ENCODE measurements at regions of chr12 and their contacts with region 1.

Region 1: DNA sequence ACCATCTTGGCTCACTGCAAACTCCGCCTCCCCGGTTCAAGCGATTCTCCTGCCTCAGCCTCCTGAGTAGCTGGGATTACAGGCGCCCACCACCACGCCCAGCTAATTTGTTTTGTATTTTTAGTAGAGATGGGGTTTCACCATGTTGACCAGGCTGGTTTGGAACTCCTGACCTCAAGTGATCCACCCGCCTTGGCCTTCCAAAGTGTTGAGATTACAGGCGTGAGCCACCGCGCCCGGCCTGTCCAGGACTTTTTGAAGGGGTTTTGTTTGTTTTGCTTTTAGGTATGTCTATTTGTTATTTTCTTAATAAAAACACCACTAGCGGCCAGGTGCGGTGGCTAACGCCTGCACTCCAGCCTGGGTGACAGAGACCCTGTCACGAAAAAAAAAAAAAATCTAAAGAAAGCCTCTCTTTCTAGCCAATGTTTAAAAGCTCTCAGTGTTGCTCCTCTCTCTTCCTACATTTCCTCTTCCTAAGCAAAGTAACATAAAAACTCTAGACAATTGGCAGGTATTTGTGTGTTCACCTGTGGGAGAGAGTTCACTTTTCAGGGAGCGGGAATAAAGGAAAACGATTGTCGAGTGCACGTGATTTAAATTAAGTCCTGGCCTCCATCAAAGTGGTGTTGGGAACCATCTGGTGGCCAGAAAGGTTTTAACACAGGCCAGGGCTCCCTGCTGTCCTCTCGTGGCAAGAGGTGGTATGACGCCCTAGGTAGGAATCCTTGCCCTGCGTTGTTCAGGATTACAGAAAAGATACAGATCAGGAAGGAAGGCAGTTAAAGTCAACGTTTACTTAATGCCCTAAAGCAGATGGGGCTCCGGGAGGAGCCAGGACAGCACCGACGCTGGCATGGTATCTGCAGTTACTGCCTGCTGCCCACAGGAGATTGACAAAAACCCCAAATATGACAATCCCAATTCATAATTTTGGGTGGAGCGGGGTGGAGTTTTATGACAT is 36.2 kb upstream of the ATP23 start:
- DNase-seq: peak; percentile 73 to 92 (median 80)
- ATAC-seq: peak; percentile 100
- H3K4me3 ChIP-seq: no peak overlapping the region
- H3K4me3 Mint-ChIP-seq: no peak overlapping the region
- H3K27ac ChIP-seq: no peak overlapping the region
- H3K27ac Mint-ChIP-seq: no peak overlapping the region
- H3K4me1 ChIP-seq: peaks cover 11% of the 10 kb centered on the region
- H3K4me1 Mint-ChIP-seq: peaks cover 12% of the 10 kb centered on the region
- H3K27me3 ChIP-seq: no peaks in the 10 kb centered on the region
- H3K27me3 Mint-ChIP-seq: peaks cover 14% of the 10 kb centered on the region
- CTCF ChIP-seq: peak; percentile 100

Region 2: DNA sequence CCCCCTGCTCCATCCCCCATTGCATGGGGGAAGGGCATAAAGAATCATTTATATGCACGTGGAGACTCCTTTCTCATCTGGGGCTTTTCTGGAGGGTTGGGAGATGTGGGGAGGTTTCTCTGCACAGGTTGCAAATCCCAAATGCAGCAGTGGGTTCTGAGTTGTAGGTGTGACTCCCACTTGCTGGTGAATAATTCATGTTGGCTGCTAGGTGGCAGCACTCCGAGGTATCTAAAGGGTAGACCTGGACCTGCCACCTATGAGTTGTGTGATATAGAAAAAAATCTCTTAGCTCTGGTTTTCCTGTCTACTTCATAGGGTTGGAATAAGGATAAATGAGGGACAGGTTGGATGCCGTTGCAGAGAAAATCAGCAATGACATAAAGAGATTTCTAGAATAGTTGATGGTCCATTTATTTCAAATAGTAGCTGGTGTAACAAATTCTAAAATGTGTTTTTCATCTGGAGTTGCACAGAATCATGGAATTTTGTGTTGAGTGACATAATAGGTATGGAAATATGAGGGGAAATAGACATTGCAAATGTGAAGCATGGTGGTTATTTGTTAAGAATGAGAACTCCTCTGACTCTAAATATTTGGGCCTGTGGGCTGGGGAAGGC is 145.7 kb before region 1 on chr12:
- CTCF ChIA-PET with region 1: interaction called, 7 read pairs
- POLR2A ChIA-PET with region 1: no interaction called
- intact Hi-C with region 1: loop called (anchors 1 to 2 kb)
- DNase-seq: peak in 10 of 14 experiments; percentile 28 to 77 (median 42)
- ATAC-seq: no peak
- H3K4me3 ChIP-seq: no peak overlapping the region
- H3K4me3 Mint-ChIP-seq: peak overlapping the region; percentile 77
- H3K27ac ChIP-seq: no peak overlapping the region
- H3K27ac Mint-ChIP-seq: peak overlapping the region; percentile 6
- H3K4me1 ChIP-seq: peaks cover 29% of the 10 kb centered on the region
- H3K4me1 Mint-ChIP-seq: peaks cover 45% of the 10 kb centered on the region
- H3K27me3 ChIP-seq: peaks cover 3 to 4% of the 10 kb centered on the region in 2 experiments
- H3K27me3 Mint-ChIP-seq: peaks cover 17% of the 10 kb centered on the region
- CTCF ChIP-seq: peak; percentile 65

Region 3: DNA sequence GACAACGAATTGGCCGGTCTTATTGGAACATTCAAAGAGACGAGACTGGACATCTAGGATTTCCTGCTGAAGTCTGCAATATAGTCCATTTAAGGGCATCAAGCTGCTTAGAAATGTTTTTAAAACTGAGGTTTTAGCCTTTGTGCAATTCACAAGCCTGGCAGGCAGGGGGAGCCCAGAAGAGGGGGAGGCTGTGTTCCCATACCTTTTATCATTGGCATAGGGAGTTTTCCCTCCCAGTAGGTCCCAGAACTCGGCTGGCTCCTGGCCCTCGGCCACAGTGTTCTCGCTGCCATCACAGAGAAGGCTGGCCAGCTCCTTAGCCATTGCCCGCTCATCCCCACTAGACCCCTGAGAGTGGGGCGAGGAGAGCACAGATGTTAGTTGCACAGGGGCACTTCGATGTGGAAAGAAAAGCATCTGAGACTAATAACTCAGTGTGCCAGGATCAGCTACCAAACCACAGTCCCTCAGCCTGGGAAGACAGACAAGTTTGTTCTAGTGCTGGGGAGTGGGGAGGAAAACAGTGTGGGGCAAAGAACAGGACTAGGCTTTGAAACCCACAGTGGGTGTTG is 101.7 kb before region 1 on chr12:
- CTCF ChIA-PET with region 1: interaction called, 11 read pairs
- POLR2A ChIA-PET with region 1: interaction called, 3 read pairs
- intact Hi-C with region 1: loop called (anchors 1 kb)
- DNase-seq: peak in 13 of 14 experiments; percentile 10 to 58 (median 29)
- ATAC-seq: no peak
- H3K4me3 ChIP-seq: no peak overlapping the region
- H3K4me3 Mint-ChIP-seq: no peak overlapping the region
- H3K27ac ChIP-seq: no peak overlapping the region
- H3K27ac Mint-ChIP-seq: no peak overlapping the region
- H3K4me1 ChIP-seq: no peaks in the 10 kb centered on the region
- H3K4me1 Mint-ChIP-seq: no peaks in the 10 kb centered on the region
- H3K27me3 ChIP-seq: no peaks in the 10 kb centered on the region
- H3K27me3 Mint-ChIP-seq: no peaks in the 10 kb centered on the region
- CTCF ChIP-seq: peak; percentile 76

Region 4: DNA sequence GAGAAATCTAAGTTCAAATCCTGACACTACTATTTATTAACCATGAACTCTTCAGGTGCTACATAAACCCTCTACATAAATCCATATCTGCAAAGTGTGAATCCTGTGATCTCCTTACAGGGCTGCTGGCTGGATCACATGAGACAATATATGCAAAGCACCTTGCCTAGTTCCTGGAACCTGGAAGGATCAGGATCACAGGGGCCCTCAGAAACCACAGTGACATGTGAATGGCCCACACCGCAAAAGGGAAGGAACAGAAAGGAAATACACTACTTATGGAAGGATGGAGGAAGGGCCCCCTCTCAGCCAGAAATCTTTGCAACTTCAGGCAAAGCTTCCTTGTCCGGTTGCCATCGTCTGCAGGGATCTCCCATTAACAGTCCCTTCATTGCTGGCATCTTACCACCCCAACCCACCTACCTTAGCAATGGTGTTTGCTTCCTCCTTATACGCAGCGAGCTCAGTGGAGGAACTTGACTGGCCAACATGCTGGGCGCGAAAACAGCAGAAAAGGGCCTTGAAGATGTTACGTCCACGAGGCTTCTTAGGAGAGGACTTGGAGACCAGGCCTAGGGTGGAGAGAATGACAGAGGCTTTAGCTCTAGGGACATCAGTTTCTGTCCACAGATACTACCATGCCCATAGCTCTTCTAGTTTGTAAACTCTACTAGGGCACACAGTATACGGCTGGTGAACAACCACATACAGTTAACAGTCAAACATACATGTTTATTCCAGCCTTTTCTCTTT is 75.9 kb before region 1 on chr12:
- CTCF ChIA-PET with region 1: interaction called, 11 read pairs
- POLR2A ChIA-PET with region 1: no interaction called
- intact Hi-C with region 1: loop called (anchors 1 kb)
- DNase-seq: no peak
- ATAC-seq: no peak
- H3K4me3 ChIP-seq: no peak overlapping the region
- H3K4me3 Mint-ChIP-seq: no peak overlapping the region
- H3K27ac ChIP-seq: no peak overlapping the region
- H3K27ac Mint-ChIP-seq: peak overlapping the region; percentile 92
- H3K4me1 ChIP-seq: peaks cover 64% of the 10 kb centered on the region
- H3K4me1 Mint-ChIP-seq: peaks cover 51% of the 10 kb centered on the region
- H3K27me3 ChIP-seq: no peaks in the 10 kb centered on the region
- H3K27me3 Mint-ChIP-seq: no peaks in the 10 kb centered on the region
- CTCF ChIP-seq: no peak

Region 5: DNA sequence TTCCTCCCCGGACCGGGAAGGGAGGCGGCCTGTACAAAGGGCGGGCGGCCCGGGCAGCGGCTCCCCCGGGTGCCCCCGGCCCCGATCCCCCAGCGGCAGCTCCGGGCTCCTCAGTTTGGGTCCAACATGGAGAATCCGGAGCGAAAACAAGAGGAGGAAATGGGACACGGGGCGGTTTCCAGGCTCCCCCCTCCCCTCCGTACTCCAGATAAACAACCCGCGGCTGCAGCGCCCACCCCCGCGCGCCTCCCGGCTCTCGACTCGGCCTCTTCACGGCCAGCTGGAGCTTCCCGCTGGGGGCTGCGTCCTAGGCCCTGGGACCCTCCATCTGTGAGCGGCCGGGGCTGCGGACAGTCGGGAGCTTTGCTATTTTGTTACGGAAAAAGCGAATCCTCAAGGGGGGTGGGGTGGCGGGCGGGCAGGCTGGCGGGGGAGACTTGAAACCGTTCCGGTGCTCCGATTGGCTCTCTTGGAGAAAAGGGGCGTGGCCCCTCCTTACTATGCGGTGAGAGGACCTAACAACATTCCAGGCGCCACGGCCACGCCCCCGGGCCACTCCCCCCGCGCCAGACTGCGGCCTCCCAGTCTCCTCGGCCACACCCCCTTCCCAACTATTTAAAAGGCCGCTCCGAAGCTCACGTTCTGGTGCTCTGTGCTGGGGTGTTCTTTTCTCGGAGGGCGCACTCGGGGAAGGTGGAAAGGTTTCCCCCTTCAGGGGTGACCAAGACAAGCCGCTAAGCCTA is 58.4 kb before region 1 on chr12 and contains the start of gene CTDSP2:
- CTCF ChIA-PET with region 1: interaction called, 8 read pairs
- POLR2A ChIA-PET with region 1: interaction called, 124 read pairs
- intact Hi-C with region 1: no loop called
- DNase-seq: peak; percentile 66 to 98 (median 88)
- ATAC-seq: peak; percentile 28
- H3K4me3 ChIP-seq: peak within 1 kb of the TSS; percentile 86
- H3K4me3 Mint-ChIP-seq: peak within 1 kb of the TSS; percentile 87
- H3K27ac ChIP-seq: peak within 1 kb of the TSS; percentile 57 to 91
- H3K27ac Mint-ChIP-seq: peak within 1 kb of the TSS; percentile 92
- H3K4me1 ChIP-seq: peaks cover 47% of the 10 kb centered on the region
- H3K4me1 Mint-ChIP-seq: peaks cover 53% of the 10 kb centered on the region
- H3K27me3 ChIP-seq: no peaks in the 10 kb centered on the region
- H3K27me3 Mint-ChIP-seq: peaks cover 5% of the 10 kb centered on the region
- CTCF ChIP-seq: no peak
- total RNA-seq, gene CTDSP2: 86.2 to 86.4 TPM

Region 6: GRCh38 chr12:58378028-58378427 is 472.9 kb after region 1 on chr12:
- CTCF ChIA-PET with region 1: no interaction called
- POLR2A ChIA-PET with region 1: no interaction called
- intact Hi-C with region 1: no loop called
- DNase-seq: no peak
- ATAC-seq: no peak
- H3K4me3 ChIP-seq: no peak overlapping the region
- H3K4me3 Mint-ChIP-seq: no peak overlapping the region
- H3K27ac ChIP-seq: no peak overlapping the region
- H3K27ac Mint-ChIP-seq: no peak overlapping the region
- H3K4me1 ChIP-seq: no peaks in the 10 kb centered on the region
- H3K4me1 Mint-ChIP-seq: no peaks in the 10 kb centered on the region
- H3K27me3 ChIP-seq: no peaks in the 10 kb centered on the region
- H3K27me3 Mint-ChIP-seq: peaks cover 16% of the 10 kb centered on the region
- CTCF ChIP-seq: no peak